ENCODE measurements at regions of chr6 and their contacts with region 1.

Region 1: GRCh38 chr6:15245361-15246216 is at the start of gene JARID2:
- DNase-seq: peak; percentile 92
- H3K4me3 Mint-ChIP-seq: peak within 1 kb of the TSS; percentile 98
- H3K27ac Mint-ChIP-seq: peak within 1 kb of the TSS; percentile 96
- H3K4me1 Mint-ChIP-seq: peaks cover 17% of the 10 kb centered on the region
- H3K27me3 Mint-ChIP-seq: no peaks in the 10 kb centered on the region
- total RNA-seq, gene JARID2: 60.5 and 62.5 TPM in 2 replicates

Region 2: GRCh38 chr6:13814176-13814937 is 1431.2 kb before region 1 on chr6 and contains the start of gene MCUR1:
- intact Hi-C with region 1: loop called (anchors 10 kb)
- DNase-seq: peak; percentile 80
- H3K4me3 Mint-ChIP-seq: peak within 1 kb of the TSS; percentile 85
- H3K27ac Mint-ChIP-seq: peak within 1 kb of the TSS; percentile 52
- H3K4me1 Mint-ChIP-seq: peaks cover 38% of the 10 kb centered on the region
- H3K27me3 Mint-ChIP-seq: peaks cover 2% of the 10 kb centered on the region
- total RNA-seq, gene MCUR1: 37.8 and 40.2 TPM in 2 replicates

Region 3: GRCh38 chr6:14210663-14211561 is 1034.7 kb before region 1 on chr6:
- intact Hi-C with region 1: loop called (anchors 1 kb)
- DNase-seq: peak; percentile 91
- H3K4me3 Mint-ChIP-seq: peak overlapping the region; percentile 80
- H3K27ac Mint-ChIP-seq: peak overlapping the region; percentile 70
- H3K4me1 Mint-ChIP-seq: peaks cover 29% of the 10 kb centered on the region
- H3K27me3 Mint-ChIP-seq: peaks cover 6% of the 10 kb centered on the region

Region 4: DNA sequence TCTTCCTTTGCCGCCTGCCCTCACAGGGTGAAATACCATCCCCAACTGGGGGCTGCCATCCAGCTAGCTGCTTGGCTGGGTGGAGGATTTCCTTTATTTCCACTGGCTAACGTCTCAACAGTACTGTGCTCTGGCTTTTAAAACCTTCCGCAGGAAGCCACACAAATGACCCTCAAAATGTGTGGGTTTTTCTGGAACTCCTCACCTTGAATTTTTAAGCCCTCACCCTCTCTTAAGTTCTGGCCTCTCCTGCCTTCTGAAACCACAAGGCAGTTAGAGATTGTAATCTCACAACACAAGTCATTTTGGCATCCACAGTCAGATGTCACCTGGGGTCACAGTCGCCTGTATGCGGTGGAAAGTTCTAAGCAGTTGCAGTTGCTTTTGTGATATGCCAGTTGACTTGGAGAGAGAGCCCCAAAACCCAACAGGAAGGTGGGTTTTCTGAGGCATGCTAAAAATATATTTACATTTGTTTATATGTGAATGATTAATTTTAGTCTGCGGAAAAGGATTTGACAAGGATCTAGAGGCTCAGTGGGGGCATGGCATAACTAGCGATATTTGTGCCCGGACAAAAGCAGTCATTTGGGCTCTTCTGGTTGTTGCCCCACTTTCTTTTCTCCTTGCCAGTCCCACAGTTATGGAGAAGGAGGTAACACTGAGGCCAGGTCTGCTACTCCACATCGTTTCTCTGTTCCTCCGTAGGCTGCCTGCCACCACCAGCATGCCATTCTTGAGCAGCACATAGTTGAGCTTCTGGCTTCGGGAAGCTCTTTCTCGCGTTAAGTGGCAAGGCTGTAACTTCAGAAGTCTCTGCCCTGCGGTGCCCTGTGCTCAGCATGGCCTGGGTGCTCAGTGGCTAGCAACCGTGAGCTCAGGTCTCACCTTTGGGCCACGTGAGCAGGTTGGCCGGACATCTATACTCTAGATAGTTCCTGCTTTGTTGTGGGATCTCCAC is 792.7 kb before region 1 on chr6:
- intact Hi-C with region 1: loop called (anchors 2 kb)
- DNase-seq: peak; percentile 62
- H3K4me3 Mint-ChIP-seq: peak overlapping the region; percentile 58
- H3K27ac Mint-ChIP-seq: peak overlapping the region; percentile 91
- H3K4me1 Mint-ChIP-seq: peaks cover 88% of the 10 kb centered on the region
- H3K27me3 Mint-ChIP-seq: peaks cover 2% of the 10 kb centered on the region

Region 5: GRCh38 chr6:14660806-14661579 is 584.6 kb before region 1 on chr6:
- intact Hi-C with region 1: loop called (anchors 5 kb)
- DNase-seq: peak; percentile 59
- H3K4me3 Mint-ChIP-seq: no peak overlapping the region
- H3K27ac Mint-ChIP-seq: no peak overlapping the region
- H3K4me1 Mint-ChIP-seq: peaks cover 59% of the 10 kb centered on the region
- H3K27me3 Mint-ChIP-seq: peaks cover 16% of the 10 kb centered on the region

Region 6: GRCh38 chr6:15121443-15121842 is 124.1 kb before region 1 on chr6:
- intact Hi-C with region 1: loop called (anchors 2 kb)
- DNase-seq: no peak
- H3K4me3 Mint-ChIP-seq: no peak overlapping the region
- H3K27ac Mint-ChIP-seq: no peak overlapping the region
- H3K4me1 Mint-ChIP-seq: peaks cover 10% of the 10 kb centered on the region
- H3K27me3 Mint-ChIP-seq: peaks cover 3% of the 10 kb centered on the region

Region 7: GRCh38 chr6:15317934-15318902 is 72.6 kb after region 1 on chr6:
- intact Hi-C with region 1: loop called (anchors 5 kb)
- DNase-seq: no peak
- H3K4me3 Mint-ChIP-seq: peak overlapping the region; percentile 43
- H3K27ac Mint-ChIP-seq: peak overlapping the region; percentile 85
- H3K4me1 Mint-ChIP-seq: peaks cover 94% of the 10 kb centered on the region
- H3K27me3 Mint-ChIP-seq: no peaks in the 10 kb centered on the region

Measured in activated T-helper 1 cell treated with anti-CD3 and anti-CD28 coated beads, Interleukin-12 subunit alpha, Interleukin-12 subunit beta, Interleukin-2, Interleukin-4 antibody, amounts not matched to agents 30 ng/mL and 10 ng/mL and 1 ng/mL, durations not matched to agents 14 hours and 24 hours and 36 hours (primary cell).